ENCODE measurements at regions of chr4 and their contacts with region 1.

Region 1: GRCh38 chr4:128287871-128288688 is 467 bp upstream of the PGRMC2 start:
- DNase-seq: peak; percentile 99 to 100
- ATAC-seq: peak; percentile 93 to 98 (median 96)
- H3K4me3 ChIP-seq: peak overlapping the region; percentile 67 to 93 (median 79)
- H3K27ac ChIP-seq: peak overlapping the region; percentile 60 to 97 (median 94)
- H3K4me1 ChIP-seq: peaks cover 0 to 43% (median 35%) of the 10 kb centered on the region in 9 donors
- H3K27me3 ChIP-seq: no peaks in the 10 kb centered on the region
- CTCF ChIP-seq: peak in 6 of 9 donors; percentile 10 to 44 (median 26)

Region 2: DNA sequence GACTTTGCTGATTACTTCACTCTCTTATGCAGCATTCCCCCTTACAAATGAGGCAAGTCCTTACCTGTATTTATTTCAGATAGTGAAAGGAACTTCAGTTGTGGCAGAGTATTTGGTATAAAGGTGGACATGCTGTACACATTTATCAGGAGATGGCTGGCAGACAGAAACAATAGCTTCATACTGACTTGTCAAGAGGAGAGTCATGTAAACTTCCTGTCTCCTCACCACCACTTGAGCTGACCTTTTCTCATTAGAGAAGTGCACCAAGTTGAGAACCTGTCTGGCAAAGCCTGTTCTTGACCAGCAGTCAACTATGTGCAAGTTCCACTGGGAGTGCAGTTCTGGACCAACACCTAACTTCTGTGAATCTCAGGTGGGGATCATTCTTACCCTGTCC is 146.2 kb before region 1 on chr4:
- intact Hi-C with region 1: no loop called
- DNase-seq: no peak
- ATAC-seq: no peak
- H3K4me3 ChIP-seq: no peak overlapping the region
- H3K27ac ChIP-seq: no peak overlapping the region
- H3K4me1 ChIP-seq: no peaks in the 10 kb centered on the region
- H3K27me3 ChIP-seq: no peaks in the 10 kb centered on the region
- CTCF ChIP-seq: no peak

Region 3: DNA sequence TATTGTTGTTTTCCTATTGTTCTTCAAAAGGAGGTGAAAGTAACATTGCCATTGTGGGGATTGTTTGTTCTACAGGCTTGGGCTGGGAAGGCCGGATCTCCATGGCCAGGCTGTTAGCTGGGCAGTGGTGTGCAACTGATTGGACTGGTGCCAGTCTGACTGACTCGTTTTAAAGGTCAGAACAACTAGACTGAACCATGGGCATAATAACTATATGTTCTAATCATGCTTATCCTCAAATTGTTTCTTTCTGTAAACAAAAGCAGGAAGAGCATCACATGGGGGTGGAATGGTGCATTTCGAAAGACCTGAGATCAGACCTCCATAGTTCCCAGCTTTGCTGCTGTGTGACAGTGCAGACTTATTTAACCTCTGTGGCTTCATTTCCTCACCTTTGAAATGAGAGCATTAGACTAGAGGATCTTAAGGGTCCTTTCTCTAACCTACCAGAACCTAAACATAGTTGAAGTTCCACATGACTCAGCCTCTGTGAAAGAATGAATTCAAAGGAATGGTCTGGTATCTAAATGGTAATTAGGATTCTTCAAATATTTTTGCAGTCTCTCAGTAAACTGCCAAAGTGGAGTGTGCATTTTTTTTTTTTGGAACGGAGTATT is 66.2 kb after region 1 on chr4:
- intact Hi-C with region 1: loop called in 3 of 10 experiments (anchors 5 kb)
- DNase-seq: peak; percentile 30 to 33
- ATAC-seq: peak in 3 of 8 donors; percentile 19 to 50 (median 22)
- H3K4me3 ChIP-seq: no peak overlapping the region
- H3K27ac ChIP-seq: peak overlapping the region in 5 of 10 donors; percentile 30 to 49 (median 36)
- H3K4me1 ChIP-seq: peaks cover 0 to 50% (median 37%) of the 10 kb centered on the region in 9 donors
- H3K27me3 ChIP-seq: no peaks in the 10 kb centered on the region
- CTCF ChIP-seq: no peak

Region 4: GRCh38 chr4:128386761-128387599 is 98.9 kb after region 1 on chr4:
- intact Hi-C with region 1: loop called in 3 of 10 experiments (anchors 1 to 10 kb)
- DNase-seq: peak; percentile 84 to 87
- ATAC-seq: peak; percentile 94 to 97 (median 96)
- H3K4me3 ChIP-seq: peak overlapping the region in 2 of 10 donors; percentile 13 to 18
- H3K27ac ChIP-seq: peak overlapping the region; percentile 44 to 86 (median 79)
- H3K4me1 ChIP-seq: peaks cover 7 to 44% (median 23%) of the 10 kb centered on the region in 9 donors
- H3K27me3 ChIP-seq: no peaks in the 10 kb centered on the region
- CTCF ChIP-seq: no peak

Region 5: GRCh38 chr4:128831531-128832242 is 543.6 kb after region 1 on chr4:
- intact Hi-C with region 1: loop called in 1 of 10 experiments (anchors 10 kb)
- DNase-seq: peak in 1 of 2 donors; percentile 11
- ATAC-seq: no peak
- H3K4me3 ChIP-seq: no peak overlapping the region
- H3K27ac ChIP-seq: peak overlapping the region in 9 of 10 donors; percentile 20 to 58 (median 41)
- H3K4me1 ChIP-seq: peaks cover 15 to 81% (median 53%) of the 10 kb centered on the region in 9 donors
- H3K27me3 ChIP-seq: no peaks in the 10 kb centered on the region
- CTCF ChIP-seq: no peak

Measured in heart right ventricle (tissue), 16 donors.